Right cardiac atrium (tissue), 5 donors: ENCODE measurements at regions of chr4 and their contacts with region 1.

Region 1: GRCh38 chr4:6716018-6716911 is at the start of gene BLOC1S4:
- DNase-seq: peak; percentile 91 to 97 (median 95)
- ATAC-seq: peak; percentile 92 to 94
- H3K4me3 ChIP-seq: peak within 1 kb of the TSS; percentile 41
- H3K27ac ChIP-seq: peak within 1 kb of the TSS; percentile 74
- H3K4me1 ChIP-seq: no peaks in the 10 kb centered on the region
- H3K27me3 ChIP-seq: no peaks in the 10 kb centered on the region
- total RNA-seq, gene BLOC1S4: 7.5 to 9.1 (median 8.4) TPM

Region 2: GRCh38 chr4:6332042-6332668 is 384.1 kb before region 1 on chr4:
- intact Hi-C with region 1: no loop called
- DNase-seq: peak in 1 of 3 donors; percentile 39
- ATAC-seq: peak; percentile 6 to 8
- H3K4me3 ChIP-seq: no peak overlapping the region
- H3K27ac ChIP-seq: no peak overlapping the region
- H3K4me1 ChIP-seq: no peaks in the 10 kb centered on the region
- H3K27me3 ChIP-seq: no peaks in the 10 kb centered on the region

Region 3: DNA sequence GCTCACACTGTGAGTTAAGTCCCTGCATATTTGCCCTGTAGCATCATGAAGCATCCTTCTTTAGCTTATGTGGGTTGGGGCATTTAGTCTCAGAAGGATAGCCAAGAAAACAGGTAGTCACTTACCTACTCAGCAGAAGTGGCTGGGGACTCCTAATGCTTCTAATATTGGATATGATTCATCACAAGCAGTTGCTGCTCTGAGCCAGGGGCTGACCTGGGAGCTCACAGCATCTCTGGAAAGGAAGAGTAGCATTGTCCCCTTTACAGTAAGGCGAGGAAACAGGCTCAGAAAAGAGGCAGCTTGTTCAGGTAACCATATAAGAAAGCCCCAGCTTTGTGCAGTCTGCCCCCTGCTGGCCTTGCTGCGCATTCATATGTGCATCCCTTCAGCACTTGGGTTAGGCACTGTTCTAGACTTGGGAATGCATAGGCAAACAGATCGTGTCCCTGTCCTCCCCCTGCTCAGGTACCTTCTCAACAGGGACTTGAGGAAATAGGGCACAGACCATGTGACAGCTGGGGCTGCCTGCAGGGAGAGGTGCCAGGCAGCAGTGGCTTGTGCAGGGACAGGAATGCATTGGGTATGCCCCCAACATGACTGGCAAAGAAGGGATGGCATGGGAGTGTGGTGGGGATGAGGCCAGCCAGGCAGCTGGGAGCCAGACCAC is 157.7 kb after region 1 on chr4:
- intact Hi-C with region 1: loop called (anchors 2 to 5 kb)
- DNase-seq: peak; percentile 73 to 92 (median 85)
- ATAC-seq: peak; percentile 61 to 77
- H3K4me3 ChIP-seq: no peak overlapping the region
- H3K27ac ChIP-seq: no peak overlapping the region
- H3K4me1 ChIP-seq: peaks cover 4% of the 10 kb centered on the region
- H3K27me3 ChIP-seq: no peaks in the 10 kb centered on the region